Activated B cell treated with CpG ODN at 0.5 μM for 24 hours (primary cell): ENCODE measurements at regions of chr4 and their contacts with region 1.

Region 1: DNA sequence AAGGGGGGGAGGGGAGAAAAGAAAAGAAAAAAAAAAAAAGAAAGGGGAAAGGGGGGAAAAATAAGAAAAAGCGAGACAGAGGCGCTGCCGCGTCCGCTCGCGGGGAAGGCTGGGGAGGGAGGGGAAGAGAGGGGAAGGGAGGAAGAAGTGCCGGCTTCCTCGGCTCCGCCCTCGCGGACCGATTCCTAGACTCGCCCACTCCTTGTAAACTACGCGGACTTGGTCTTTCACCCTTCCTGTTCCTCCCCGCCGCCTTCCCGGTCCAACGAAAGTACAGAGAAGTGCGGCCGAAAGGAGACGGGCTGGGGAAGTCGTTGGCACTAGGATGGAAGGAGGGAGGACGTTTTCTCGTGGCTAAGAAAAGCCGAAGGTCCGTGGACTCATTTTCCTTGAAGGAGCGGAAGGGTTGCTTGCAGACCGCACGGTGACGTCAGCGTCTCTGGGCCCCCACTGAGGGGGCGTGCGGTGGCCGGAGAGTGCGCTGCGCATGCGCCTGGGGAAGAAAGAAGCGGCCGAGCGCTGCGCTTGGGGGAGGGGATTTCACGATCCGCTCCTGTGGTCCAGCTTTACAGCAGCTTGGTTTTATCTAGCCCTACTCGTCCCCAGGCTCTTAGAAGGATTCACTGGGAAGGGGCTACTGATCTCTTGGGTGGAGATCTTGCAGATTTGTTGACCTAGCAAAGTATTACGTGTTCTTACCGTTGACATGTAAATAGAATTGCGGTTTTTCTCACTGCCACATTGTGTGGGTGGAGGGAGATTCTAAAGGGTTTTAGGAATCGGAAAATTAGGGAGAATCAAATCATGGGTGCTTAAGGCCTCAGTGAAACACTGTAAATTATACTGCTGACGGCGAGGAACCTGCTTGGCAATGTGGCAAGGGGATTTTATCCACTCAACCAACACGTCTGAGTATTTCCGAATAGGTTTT is at the start of gene CCNI:
- DNase-seq: peak; percentile 93
- ATAC-seq: peak; percentile 77
- H3K4me3 Mint-ChIP-seq: no peak within 1 kb of the TSS
- H3K27ac Mint-ChIP-seq: peak within 1 kb of the TSS; percentile 100
- H3K4me1 Mint-ChIP-seq: peaks cover 40% of the 10 kb centered on the region
- H3K27me3 Mint-ChIP-seq: no peaks in the 10 kb centered on the region
- CTCF ChIP-seq: no peak
- total RNA-seq, gene CCNI: 237 and 246 TPM in 2 replicates

Region 2: GRCh38 chr4:76213415-76214176 is 862.5 kb before region 1 on chr4 and contains the start of gene SCARB2:
- CTCF ChIA-PET with region 1: no interaction called
- POLR2A ChIA-PET with region 1: no interaction called
- intact Hi-C with region 1: loop called (anchors 5 kb)
- DNase-seq: peak; percentile 83
- ATAC-seq: peak; percentile 80
- H3K4me3 Mint-ChIP-seq: peak within 1 kb of the TSS; percentile 91
- H3K27ac Mint-ChIP-seq: peak within 1 kb of the TSS; percentile 90
- H3K4me1 Mint-ChIP-seq: peaks cover 51% of the 10 kb centered on the region
- H3K27me3 Mint-ChIP-seq: no peaks in the 10 kb centered on the region
- CTCF ChIP-seq: no peak
- total RNA-seq, gene SCARB2: 17.2 and 21.8 TPM in 2 replicates

Region 3: GRCh38 chr4:77095101-77095821 is 19.1 kb after region 1 on chr4:
- CTCF ChIA-PET with region 1: interaction called, 8 read pairs
- POLR2A ChIA-PET with region 1: interaction called, 15 read pairs
- intact Hi-C with region 1: loop called (anchors 1 kb)
- DNase-seq: peak; percentile 53
- ATAC-seq: peak; percentile 100
- H3K4me3 Mint-ChIP-seq: no peak overlapping the region
- H3K27ac Mint-ChIP-seq: peak overlapping the region; percentile 8
- H3K4me1 Mint-ChIP-seq: peaks cover 27% of the 10 kb centered on the region
- H3K27me3 Mint-ChIP-seq: no peaks in the 10 kb centered on the region
- CTCF ChIP-seq: peak; percentile 86

Region 4: DNA sequence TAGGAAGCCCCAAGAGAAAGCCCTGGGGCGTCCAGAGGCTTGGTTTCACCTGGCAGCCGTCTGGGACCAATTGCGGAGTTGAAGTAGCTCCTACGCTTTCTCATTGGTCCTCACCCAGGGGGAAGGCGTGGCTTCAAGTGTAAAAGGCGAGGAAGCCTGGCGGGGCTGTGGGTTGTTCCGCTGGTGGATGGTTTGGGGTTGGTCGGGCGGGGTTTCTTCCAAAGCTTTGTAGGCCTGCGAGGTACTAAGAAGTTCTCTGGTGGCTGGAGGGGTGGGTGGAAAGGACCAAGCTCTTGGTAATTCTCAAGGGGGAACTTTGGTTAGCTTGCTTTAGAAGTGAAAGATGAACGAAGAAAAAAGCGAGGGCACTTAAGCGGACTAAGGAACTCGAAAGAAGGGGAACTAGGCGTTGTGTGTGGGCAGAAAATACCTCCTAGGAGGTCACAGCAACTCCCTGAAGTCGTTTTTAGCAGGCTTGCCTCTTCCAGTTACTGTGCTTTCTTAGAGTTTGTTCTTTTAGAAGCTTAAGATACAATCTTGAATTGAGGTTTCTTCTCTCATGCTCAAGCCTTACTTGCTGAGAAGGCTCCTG is 117.5 kb after region 1 on chr4:
- CTCF ChIA-PET with region 1: interaction called, 4 read pairs
- POLR2A ChIA-PET with region 1: interaction called, 48 read pairs
- intact Hi-C with region 1: loop called (anchors 1 kb)
- DNase-seq: peak; percentile 73
- ATAC-seq: peak; percentile 91
- H3K4me3 Mint-ChIP-seq: peak overlapping the region; percentile 85
- H3K27ac Mint-ChIP-seq: peak overlapping the region; percentile 97
- H3K4me1 Mint-ChIP-seq: peaks cover 55% of the 10 kb centered on the region
- H3K27me3 Mint-ChIP-seq: no peaks in the 10 kb centered on the region
- CTCF ChIP-seq: no peak

Region 5: GRCh38 chr4:77629885-77630284 is 553.8 kb after region 1 on chr4:
- CTCF ChIA-PET with region 1: no interaction called
- POLR2A ChIA-PET with region 1: no interaction called
- intact Hi-C with region 1: no loop called
- DNase-seq: no peak
- ATAC-seq: no peak
- H3K4me3 Mint-ChIP-seq: no peak overlapping the region
- H3K27ac Mint-ChIP-seq: no peak overlapping the region
- H3K4me1 Mint-ChIP-seq: peaks cover 7% of the 10 kb centered on the region
- H3K27me3 Mint-ChIP-seq: no peaks in the 10 kb centered on the region
- CTCF ChIP-seq: no peak

Region 6: GRCh38 chr4:77734928-77735327 is 658.8 kb after region 1 on chr4:
- CTCF ChIA-PET with region 1: no interaction called
- POLR2A ChIA-PET with region 1: no interaction called
- intact Hi-C with region 1: loop called (anchors 10 kb)
- DNase-seq: no peak
- ATAC-seq: peak; percentile 71
- H3K4me3 Mint-ChIP-seq: no peak overlapping the region
- H3K27ac Mint-ChIP-seq: peak overlapping the region; percentile 57
- H3K4me1 Mint-ChIP-seq: peaks cover 42% of the 10 kb centered on the region
- H3K27me3 Mint-ChIP-seq: no peaks in the 10 kb centered on the region
- CTCF ChIP-seq: no peak